HepG2 (cell line): ENCODE measurements at regions of chr12 and their contacts with region 1.

Region 1: GRCh38 chr12:27383429-27384260 is 51.0 kb downstream of the BMAL2 start:
- DNase-seq: peak; percentile 60
- ATAC-seq: peak; percentile 87
- H3K4me3 ChIP-seq: no peak overlapping the region
- H3K27ac ChIP-seq: no peak overlapping the region
- H3K4me1 ChIP-seq: no peaks in the 10 kb centered on the region
- H3K27me3 ChIP-seq: no peaks in the 10 kb centered on the region
- CTCF ChIP-seq: peak; percentile 83
- EP300 ChIP-seq: no peak
- POLR2A ChIP-seq: no peak
- RAD21 ChIP-seq: 0 out of 2 replicates have a peak, but pooled peaks have one; percentile 35

Region 2: GRCh38 chr12:27332407-27333301 is 51.0 kb before region 1 on chr12 and contains the start of gene BMAL2:
- CTCF ChIA-PET with region 1: no interaction called
- POLR2A ChIA-PET with region 1: no interaction called
- in situ Hi-C with region 1: no loop called
- intact Hi-C with region 1: loop called (anchors 1 kb)
- DNase-seq: peak; percentile 20
- ATAC-seq: peak; percentile 85
- H3K4me3 ChIP-seq: peak within 1 kb of the TSS; percentile 79 to 82 (median 80)
- H3K27ac ChIP-seq: peak within 1 kb of the TSS; percentile 52
- H3K4me1 ChIP-seq: peaks cover 50% of the 10 kb centered on the region
- H3K27me3 ChIP-seq: no peaks in the 10 kb centered on the region; a peak in 1 of 5 replicates
- CTCF ChIP-seq: no peak
- EP300 ChIP-seq: no peak
- POLR2A ChIP-seq: no peak; a peak in 2 of 4 replicates
- RAD21 ChIP-seq: 0 out of 2 replicates have a peak, but pooled peaks have one; percentile 10
- total RNA-seq, gene BMAL2: 27.4 and 37.1 TPM in 2 replicates

Region 3: GRCh38 chr12:27486961-27487360 is 103.3 kb after region 1 on chr12:
- CTCF ChIA-PET with region 1: no interaction called
- POLR2A ChIA-PET with region 1: no interaction called
- in situ Hi-C with region 1: no loop called
- intact Hi-C with region 1: loop called (anchors 1 kb)
- DNase-seq: no peak
- ATAC-seq: no peak
- H3K4me3 ChIP-seq: no peak overlapping the region
- H3K27ac ChIP-seq: no peak overlapping the region
- H3K4me1 ChIP-seq: peaks cover 4% of the 10 kb centered on the region; the same call in 1 of the 2 replicates
- H3K27me3 ChIP-seq: no peaks in the 10 kb centered on the region; a peak in 1 of 5 replicates
- CTCF ChIP-seq: no peak
- EP300 ChIP-seq: no peak
- POLR2A ChIP-seq: no peak
- RAD21 ChIP-seq: no peak